Activated CD4-positive, alpha-beta memory T cell treated with anti-CD3 and anti-CD28 coated beads for 36 hours (primary cell): ENCODE measurements at regions of chrX and their contacts with region 1.

Region 1: DNA sequence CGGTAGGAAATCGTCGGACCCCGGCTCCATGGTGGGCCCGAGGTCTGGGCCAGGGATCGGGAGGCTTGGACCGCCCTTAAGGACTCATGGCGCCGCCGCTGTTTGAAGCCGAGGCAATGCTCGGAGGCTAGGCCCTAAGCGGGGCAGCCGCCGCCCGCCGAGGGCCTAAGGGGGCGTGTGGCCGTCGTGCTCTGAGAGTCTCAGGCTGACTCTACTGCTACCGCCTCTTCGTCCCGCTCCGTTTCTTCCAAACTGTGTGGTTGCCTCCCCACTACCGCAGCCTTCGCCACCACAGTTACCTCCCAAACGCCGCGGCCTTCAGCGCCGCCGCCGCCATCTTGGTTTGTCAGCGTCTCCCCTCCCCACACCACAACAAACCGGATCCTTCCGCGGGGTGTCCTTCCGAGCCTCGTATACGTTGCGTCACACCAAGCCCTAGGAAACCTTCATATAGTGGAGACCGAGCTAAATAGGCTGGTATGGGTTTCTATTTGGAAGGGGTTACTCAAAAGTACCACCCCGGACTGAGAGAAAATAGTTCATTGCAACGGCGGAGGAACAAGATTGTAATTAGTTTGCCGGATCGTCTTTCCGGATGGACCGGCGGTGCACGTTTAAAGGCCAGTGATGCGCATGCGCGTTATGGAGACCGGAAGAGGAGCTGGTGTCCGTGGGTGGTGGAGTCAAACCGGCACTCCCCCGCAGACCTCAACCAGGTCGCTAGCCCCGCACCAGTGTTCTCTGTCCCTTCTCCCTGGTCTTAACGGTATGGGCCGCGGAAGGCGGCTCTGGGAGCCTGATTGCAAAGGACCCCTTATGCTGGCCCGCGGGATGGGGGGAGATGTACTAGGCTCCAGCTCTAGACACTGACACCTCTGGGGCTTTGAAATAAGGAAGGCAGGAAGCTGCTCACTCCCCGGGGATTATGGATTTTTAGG is at the start of gene KDM5C:
- DNase-seq: peak; percentile 91
- H3K4me3 Mint-ChIP-seq: peak within 1 kb of the TSS; percentile 93
- H3K27ac Mint-ChIP-seq: peak within 1 kb of the TSS; percentile 97
- H3K4me1 Mint-ChIP-seq: peaks cover 28% of the 10 kb centered on the region
- H3K27me3 Mint-ChIP-seq: no peaks in the 10 kb centered on the region
- total RNA-seq, gene KDM5C: 77.6 to 86.0 TPM

Region 2: GRCh38 chrX:53047228-53047627 is 177.9 kb before region 1 on chrX:
- CTCF ChIA-PET with region 1: no interaction called
- POLR2A ChIA-PET with region 1: no interaction called
- intact Hi-C with region 1: no loop called
- DNase-seq: no peak
- H3K4me3 Mint-ChIP-seq: no peak overlapping the region
- H3K27ac Mint-ChIP-seq: no peak overlapping the region
- H3K4me1 Mint-ChIP-seq: no peaks in the 10 kb centered on the region
- H3K27me3 Mint-ChIP-seq: peaks cover 7% of the 10 kb centered on the region

Region 3: GRCh38 chrX:53188763-53189162 is 36.4 kb before region 1 on chrX:
- CTCF ChIA-PET with region 1: no interaction called
- POLR2A ChIA-PET with region 1: no interaction called
- intact Hi-C with region 1: loop called (anchors 5 kb)
- DNase-seq: peak; percentile 69
- H3K4me3 Mint-ChIP-seq: no peak overlapping the region
- H3K27ac Mint-ChIP-seq: peak overlapping the region; percentile 54
- H3K4me1 Mint-ChIP-seq: peaks cover 24% of the 10 kb centered on the region
- H3K27me3 Mint-ChIP-seq: no peaks in the 10 kb centered on the region

Region 4: GRCh38 chrX:53211391-53211978 is 13.6 kb before region 1 on chrX:
- CTCF ChIA-PET with region 1: no interaction called
- POLR2A ChIA-PET with region 1: no interaction called
- intact Hi-C with region 1: no loop called
- DNase-seq: no peak
- H3K4me3 Mint-ChIP-seq: no peak overlapping the region
- H3K27ac Mint-ChIP-seq: peak overlapping the region; percentile 2
- H3K4me1 Mint-ChIP-seq: no peaks in the 10 kb centered on the region
- H3K27me3 Mint-ChIP-seq: no peaks in the 10 kb centered on the region